Activated T-helper 1 cell treated with anti-CD3 and anti-CD28 coated beads, Interleukin-12 subunit alpha, Interleukin-12 subunit beta, Interleukin-2, Interleukin-4 antibody, amounts not matched to agents 30 ng/mL and 10 ng/mL and 1 ng/mL, durations not matched to agents 14 hours and 24 hours and 36 hours (primary cell): ENCODE measurements at regions of chr2 and their contacts with region 1.

Region 1: DNA sequence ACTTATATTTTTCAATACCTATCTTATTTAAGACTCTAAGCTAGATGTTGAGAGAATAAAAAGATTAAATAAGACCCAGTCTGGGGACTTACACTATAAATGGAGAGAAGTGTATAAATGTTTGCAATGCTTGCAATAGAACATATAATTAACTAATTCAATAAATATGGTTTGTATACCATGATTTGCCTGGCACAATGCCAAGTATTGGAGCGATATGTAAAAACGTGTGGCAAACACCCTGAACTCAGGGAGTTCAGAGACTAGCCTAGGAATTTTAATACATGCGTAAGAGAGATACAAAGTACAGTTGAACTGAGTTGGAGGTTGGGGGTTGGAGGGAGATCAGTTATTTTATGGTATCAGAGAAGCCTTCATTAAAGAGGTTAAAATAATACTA is 251.8 kb upstream of the DDX18 start:
- DNase-seq: no peak
- H3K4me3 Mint-ChIP-seq: no peak overlapping the region
- H3K27ac Mint-ChIP-seq: no peak overlapping the region
- H3K4me1 Mint-ChIP-seq: no peaks in the 10 kb centered on the region
- H3K27me3 Mint-ChIP-seq: no peaks in the 10 kb centered on the region

Region 2: GRCh38 chr2:116809109-116809508 is 753.5 kb before region 1 on chr2:
- intact Hi-C with region 1: no loop called
- DNase-seq: no peak
- H3K4me3 Mint-ChIP-seq: no peak overlapping the region
- H3K27ac Mint-ChIP-seq: no peak overlapping the region
- H3K4me1 Mint-ChIP-seq: no peaks in the 10 kb centered on the region
- H3K27me3 Mint-ChIP-seq: no peaks in the 10 kb centered on the region

Region 3: DNA sequence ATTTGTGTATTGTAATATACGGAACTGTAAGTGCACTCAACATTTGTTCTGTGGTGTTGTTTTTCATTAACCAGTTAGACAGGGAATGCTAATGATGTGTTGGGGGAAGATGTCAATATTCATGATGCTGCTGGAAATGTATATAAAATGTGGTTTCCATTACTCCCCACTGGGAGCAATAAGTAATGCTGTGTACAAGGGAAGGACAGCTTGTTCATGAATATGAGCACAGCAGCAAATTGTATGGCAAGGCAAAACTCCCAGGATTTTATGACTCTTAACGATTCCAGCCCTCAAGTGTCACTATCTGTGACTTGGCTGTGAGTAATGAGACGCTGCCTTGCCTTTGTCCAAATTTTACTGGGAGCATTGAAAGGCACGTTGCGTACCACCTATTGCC is 60.5 kb before region 1 on chr2:
- intact Hi-C with region 1: no loop called
- DNase-seq: no peak
- H3K4me3 Mint-ChIP-seq: no peak overlapping the region
- H3K27ac Mint-ChIP-seq: no peak overlapping the region
- H3K4me1 Mint-ChIP-seq: no peaks in the 10 kb centered on the region
- H3K27me3 Mint-ChIP-seq: no peaks in the 10 kb centered on the region

Region 4: DNA sequence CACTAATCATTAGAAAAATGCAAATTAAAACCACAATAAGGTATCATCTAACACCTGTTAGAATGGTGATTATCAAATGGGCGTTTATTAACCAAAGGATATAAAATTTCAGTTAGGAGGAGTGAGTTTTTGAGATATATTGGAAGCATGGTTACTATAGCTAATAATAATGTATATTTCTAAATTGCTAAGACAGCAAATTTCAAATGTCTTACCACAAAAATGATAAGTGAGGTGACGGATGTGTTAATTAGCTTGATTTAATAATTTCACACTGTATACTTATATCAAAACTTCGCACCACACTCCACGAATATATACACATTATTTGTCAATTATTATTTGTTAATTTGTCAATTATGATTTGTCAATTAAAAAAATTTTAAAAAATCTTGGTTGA is 24.7 kb after region 1 on chr2:
- intact Hi-C with region 1: loop called (anchors 2 kb)
- DNase-seq: no peak
- H3K4me3 Mint-ChIP-seq: no peak overlapping the region
- H3K27ac Mint-ChIP-seq: no peak overlapping the region
- H3K4me1 Mint-ChIP-seq: no peaks in the 10 kb centered on the region
- H3K27me3 Mint-ChIP-seq: no peaks in the 10 kb centered on the region

Region 5: GRCh38 chr2:117686699-117687098 is 124.0 kb after region 1 on chr2:
- intact Hi-C with region 1: no loop called
- DNase-seq: no peak
- H3K4me3 Mint-ChIP-seq: no peak overlapping the region
- H3K27ac Mint-ChIP-seq: no peak overlapping the region
- H3K4me1 Mint-ChIP-seq: no peaks in the 10 kb centered on the region
- H3K27me3 Mint-ChIP-seq: peaks cover 1% of the 10 kb centered on the region